ENCODE measurements at regions of chr17 and their contacts with region 1.

Region 1: DNA sequence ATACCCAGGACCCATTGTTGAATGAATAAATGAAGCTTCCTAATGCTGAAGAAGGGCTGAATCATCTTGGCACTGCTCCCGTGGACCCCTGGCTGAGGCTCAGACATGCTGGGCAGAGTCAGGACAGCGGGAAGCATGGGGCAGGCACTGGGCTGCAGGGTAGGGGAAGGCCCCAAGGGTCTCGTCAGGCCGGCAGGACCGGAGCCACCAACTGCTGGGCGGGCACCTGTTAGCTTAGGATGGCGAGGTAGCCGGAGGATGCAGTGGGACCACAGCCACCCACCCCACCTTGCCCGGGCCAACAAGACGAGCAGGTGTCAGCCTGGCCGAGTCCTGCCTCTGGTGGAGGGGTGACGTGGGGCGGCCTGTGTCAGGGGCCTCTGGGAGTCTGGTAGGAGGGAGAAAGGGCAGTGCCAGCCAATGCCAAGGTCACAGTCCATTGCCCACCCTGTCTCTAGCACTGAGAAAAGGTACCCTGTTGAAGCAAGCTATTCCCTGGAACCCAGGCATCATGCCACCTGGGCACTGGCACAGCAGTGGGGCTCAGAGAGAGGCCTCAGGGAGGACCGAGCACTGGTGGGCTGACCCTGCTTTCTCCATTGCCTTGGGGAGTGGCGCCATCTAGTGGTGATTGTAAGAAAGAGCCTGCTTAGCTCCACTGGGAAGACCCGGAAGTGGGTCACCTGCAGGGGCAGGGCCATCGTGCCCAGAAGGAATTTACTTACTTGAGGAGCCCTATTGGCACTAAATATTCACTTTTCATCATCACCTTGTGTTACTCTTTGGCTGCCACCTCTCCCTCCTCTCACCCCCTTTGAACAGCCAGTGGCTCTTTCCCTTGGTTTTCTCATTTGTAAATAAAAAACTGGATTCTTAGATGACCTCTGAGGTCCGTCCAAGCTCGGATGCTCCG is 3.0 kb upstream of the DLX3 start:
- DNase-seq: peak; percentile 57 to 83
- ATAC-seq: peak; percentile 48 to 85 (median 76)
- H3K4me3 ChIP-seq: no peak overlapping the region
- H3K27ac ChIP-seq: no peak overlapping the region
- H3K4me1 ChIP-seq: peaks cover 7 to 34% (median 30%) of the 10 kb centered on the region in 9 donors
- H3K27me3 ChIP-seq: peaks cover 29 to 97% (median 95%) of the 10 kb centered on the region in 7 donors
- CTCF ChIP-seq: peak; percentile 89 to 96 (median 95)

Region 2: GRCh38 chr17:49575579-49576087 is 422.4 kb before region 1 on chr17 and contains the start of gene NXPH3:
- intact Hi-C with region 1: loop called in 2 of 10 experiments (anchors 5 kb)
- DNase-seq: peak; percentile 62 to 81
- ATAC-seq: peak; percentile 22 to 80 (median 44)
- H3K4me3 ChIP-seq: peak within 1 kb of the TSS; percentile 56 to 79 (median 74)
- H3K27ac ChIP-seq: peak within 1 kb of the TSS in 9 of 10 donors; percentile 17 to 84 (median 61)
- H3K4me1 ChIP-seq: peaks cover 6 to 48% (median 21%) of the 10 kb centered on the region in 9 donors
- H3K27me3 ChIP-seq: peaks cover 0 to 41% (median 0%) of the 10 kb centered on the region in 7 donors
- CTCF ChIP-seq: peak in 8 of 9 donors; percentile 35 to 83 (median 68)
- total RNA-seq, gene NXPH3: 2.2 to 4.4 (median 3.2) TPM

Region 3: DNA sequence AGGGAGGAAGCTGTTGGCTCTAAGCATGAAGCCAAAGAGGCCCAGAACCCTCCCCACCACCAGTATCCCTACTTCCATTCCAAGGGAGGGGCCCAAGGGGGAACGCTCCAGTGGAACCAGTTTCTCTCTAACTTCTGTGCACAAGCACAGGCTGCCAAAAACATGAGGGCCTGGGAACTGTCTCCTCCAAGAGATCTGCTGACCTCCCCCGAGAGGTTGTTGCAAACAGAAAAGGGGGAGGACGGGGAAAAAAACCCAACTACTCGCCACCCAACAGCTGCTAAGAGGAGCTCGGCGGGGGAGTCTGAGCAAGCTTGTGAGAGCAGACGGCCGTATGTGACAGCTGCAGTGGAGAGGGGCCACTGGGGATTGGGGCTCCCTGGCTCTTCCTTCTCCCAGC is 274.6 kb before region 1 on chr17:
- intact Hi-C with region 1: loop called in 1 of 10 experiments (anchors 10 kb)
- DNase-seq: peak; percentile 65 to 92
- ATAC-seq: peak; percentile 82 to 95 (median 86)
- H3K4me3 ChIP-seq: peak overlapping the region in 1 of 10 donors; percentile 14
- H3K27ac ChIP-seq: peak overlapping the region; percentile 26 to 86 (median 72)
- H3K4me1 ChIP-seq: peaks cover 8 to 71% (median 36%) of the 10 kb centered on the region in 9 donors
- H3K27me3 ChIP-seq: no peaks in the 10 kb centered on the region
- CTCF ChIP-seq: no peak

Region 4: GRCh38 chr17:49873466-49873865 is 124.6 kb before region 1 on chr17:
- intact Hi-C with region 1: loop called in 1 of 10 experiments (anchors 5 kb)
- DNase-seq: no peak
- ATAC-seq: no peak
- H3K4me3 ChIP-seq: no peak overlapping the region
- H3K27ac ChIP-seq: no peak overlapping the region
- H3K4me1 ChIP-seq: no peaks in the 10 kb centered on the region
- H3K27me3 ChIP-seq: peaks cover 0 to 30% (median 11%) of the 10 kb centered on the region in 7 donors
- CTCF ChIP-seq: no peak

Region 5: GRCh38 chr17:49952209-49952911 is 45.7 kb before region 1 on chr17:
- intact Hi-C with region 1: loop called in 5 of 10 experiments (anchors 5 kb)
- DNase-seq: peak; percentile 67 to 68
- ATAC-seq: peak in 6 of 8 donors; percentile 48 to 83 (median 75)
- H3K4me3 ChIP-seq: no peak overlapping the region
- H3K27ac ChIP-seq: no peak overlapping the region
- H3K4me1 ChIP-seq: no peaks in the 10 kb centered on the region
- H3K27me3 ChIP-seq: peaks cover 0 to 67% (median 56%) of the 10 kb centered on the region in 7 donors
- CTCF ChIP-seq: peak; percentile 43 to 89 (median 77)

Measured in heart right ventricle (tissue), 16 donors.